ENCODE measurements at regions of chr2 and their contacts with region 1.

Region 1: GRCh38 chr2:42974721-42975717 is 182.6 kb upstream of the HAAO start:
- DNase-seq: peak; percentile 74 to 90 (median 79)
- ATAC-seq: peak; percentile 57 to 91 (median 87)
- H3K4me3 ChIP-seq: peak overlapping the region in 11 of 12 donors; percentile 7 to 59 (median 48)
- H3K27ac ChIP-seq: peak overlapping the region in 10 of 12 donors; percentile 22 to 83 (median 48)
- H3K4me1 ChIP-seq: peaks cover 0 to 23% (median 12%) of the 10 kb centered on the region in 12 donors
- H3K27me3 ChIP-seq: no peaks in the 10 kb centered on the region
- CTCF ChIP-seq: peak; percentile 72 to 95 (median 89)
- POLR2A ChIP-seq: no peak

Region 2: GRCh38 chr2:43000242-43001054 is 25.4 kb after region 1 on chr2:
- intact Hi-C with region 1: no loop called
- DNase-seq: no peak
- ATAC-seq: no peak
- H3K4me3 ChIP-seq: no peak overlapping the region
- H3K27ac ChIP-seq: no peak overlapping the region
- H3K4me1 ChIP-seq: peaks cover 0 to 9% (median 0%) of the 10 kb centered on the region in 12 donors
- H3K27me3 ChIP-seq: no peaks in the 10 kb centered on the region
- CTCF ChIP-seq: no peak
- POLR2A ChIP-seq: no peak

Region 3: GRCh38 chr2:43105586-43106558 is 130.9 kb after region 1 on chr2:
- intact Hi-C with region 1: loop called in 1 of 10 experiments (anchors 10 kb)
- DNase-seq: peak; percentile 65 to 83 (median 69)
- ATAC-seq: peak; percentile 33 to 64 (median 56)
- H3K4me3 ChIP-seq: no peak overlapping the region
- H3K27ac ChIP-seq: peak overlapping the region; percentile 38 to 90 (median 72)
- H3K4me1 ChIP-seq: peaks cover 0 to 91% (median 41%) of the 10 kb centered on the region in 12 donors
- H3K27me3 ChIP-seq: no peaks in the 10 kb centered on the region
- CTCF ChIP-seq: peak in 8 of 12 donors; percentile 8 to 44 (median 29)
- POLR2A ChIP-seq: no peak

Region 4: GRCh38 chr2:43131024-43131889 is 156.2 kb after region 1 on chr2:
- intact Hi-C with region 1: loop called in 5 of 10 experiments (anchors 5 to 10 kb)
- DNase-seq: peak; percentile 65 to 87 (median 74)
- ATAC-seq: peak; percentile 57 to 66 (median 60)
- H3K4me3 ChIP-seq: peak overlapping the region in 1 of 12 donors; percentile 6
- H3K27ac ChIP-seq: peak overlapping the region; percentile 19 to 94 (median 60)
- H3K4me1 ChIP-seq: peaks cover 7 to 97% (median 43%) of the 10 kb centered on the region in 12 donors
- H3K27me3 ChIP-seq: no peaks in the 10 kb centered on the region
- CTCF ChIP-seq: peak; percentile 23 to 63 (median 45)
- POLR2A ChIP-seq: no peak